B cell (primary cell): ENCODE measurements at regions of chr12 and their contacts with region 1.

Region 1: GRCh38 chr12:104286538-104287482 is 16.7 kb upstream of the EID3 start:
- DNase-seq: peak; percentile 90
- ATAC-seq: peak; percentile 83
- H3K4me3 ChIP-seq: peak overlapping the region; percentile 61 to 93 (median 82)
- H3K4me3 Mint-ChIP-seq: peak overlapping the region; percentile 100
- H3K27ac ChIP-seq: peak overlapping the region; percentile 75 to 79
- H3K27ac Mint-ChIP-seq: peak overlapping the region; percentile 99
- H3K4me1 ChIP-seq: peaks cover 25 to 29% of the 10 kb centered on the region in 2 donors
- H3K4me1 Mint-ChIP-seq: peaks cover 37% of the 10 kb centered on the region
- H3K27me3 ChIP-seq: no peaks in the 10 kb centered on the region
- H3K27me3 Mint-ChIP-seq: no peaks in the 10 kb centered on the region
- CTCF ChIP-seq: no peak

Region 2: DNA sequence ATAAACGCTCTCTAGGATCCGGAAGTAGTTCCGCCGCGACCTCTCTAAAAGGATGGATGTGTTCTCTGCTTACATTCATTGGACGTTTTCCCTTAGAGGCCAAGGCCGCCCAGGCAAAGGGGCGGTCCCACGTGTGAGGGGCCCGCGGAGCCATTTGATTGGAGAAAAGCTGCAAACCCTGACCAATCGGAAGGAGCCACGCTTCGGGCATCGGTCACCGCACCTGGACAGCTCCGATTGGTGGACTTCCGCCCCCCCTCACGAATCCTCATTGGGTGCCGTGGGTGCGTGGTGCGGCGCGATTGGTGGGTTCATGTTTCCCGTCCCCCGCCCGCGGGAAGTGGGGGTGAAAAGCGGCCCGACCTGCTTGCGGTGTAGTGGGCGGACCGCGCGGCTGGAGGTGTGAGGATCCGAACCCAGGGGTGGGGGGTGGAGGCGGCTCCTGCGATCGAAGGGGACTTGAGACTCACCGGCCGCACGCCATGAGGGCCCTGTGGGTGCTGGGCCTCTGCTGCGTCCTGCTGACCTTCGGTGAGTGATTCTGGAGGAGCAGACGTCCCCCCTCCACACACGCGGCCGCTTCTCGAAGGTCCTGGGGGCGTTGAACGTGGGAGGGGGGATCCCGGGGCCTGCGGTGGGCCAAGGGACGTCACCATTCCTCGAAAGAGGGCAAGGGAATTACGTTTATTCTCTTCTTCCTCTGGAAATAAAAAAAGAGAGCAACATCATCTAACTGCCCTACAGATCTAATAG is 356.6 kb before region 1 on chr12 and contains the start of gene HSP90B1:
- CTCF ChIA-PET with region 1: no interaction called
- POLR2A ChIA-PET with region 1: no interaction called
- intact Hi-C with region 1: loop called (anchors 2 kb)
- DNase-seq: peak; percentile 100
- ATAC-seq: peak; percentile 72
- H3K4me3 ChIP-seq: peak within 1 kb of the TSS; percentile 80 to 93 (median 85)
- H3K4me3 Mint-ChIP-seq: peak within 1 kb of the TSS; percentile 93
- H3K27ac ChIP-seq: peak within 1 kb of the TSS; percentile 97 to 100
- H3K27ac Mint-ChIP-seq: peak within 1 kb of the TSS; percentile 98
- H3K4me1 ChIP-seq: peaks cover 32 to 34% of the 10 kb centered on the region in 2 donors
- H3K4me1 Mint-ChIP-seq: peaks cover 61% of the 10 kb centered on the region
- H3K27me3 ChIP-seq: no peaks in the 10 kb centered on the region
- H3K27me3 Mint-ChIP-seq: no peaks in the 10 kb centered on the region
- CTCF ChIP-seq: no peak
- total RNA-seq, gene HSP90B1: 203 and 207 TPM in 2 replicates

Region 3: GRCh38 chr12:104121001-104121400 is 165.8 kb before region 1 on chr12:
- CTCF ChIA-PET with region 1: no interaction called
- POLR2A ChIA-PET with region 1: no interaction called
- intact Hi-C with region 1: no loop called
- DNase-seq: no peak
- ATAC-seq: no peak
- H3K4me3 ChIP-seq: no peak overlapping the region
- H3K4me3 Mint-ChIP-seq: no peak overlapping the region
- H3K27ac ChIP-seq: no peak overlapping the region
- H3K27ac Mint-ChIP-seq: no peak overlapping the region
- H3K4me1 ChIP-seq: no peaks in the 10 kb centered on the region
- H3K4me1 Mint-ChIP-seq: no peaks in the 10 kb centered on the region
- H3K27me3 ChIP-seq: no peaks in the 10 kb centered on the region
- H3K27me3 Mint-ChIP-seq: no peaks in the 10 kb centered on the region
- CTCF ChIP-seq: no peak

Region 4: DNA sequence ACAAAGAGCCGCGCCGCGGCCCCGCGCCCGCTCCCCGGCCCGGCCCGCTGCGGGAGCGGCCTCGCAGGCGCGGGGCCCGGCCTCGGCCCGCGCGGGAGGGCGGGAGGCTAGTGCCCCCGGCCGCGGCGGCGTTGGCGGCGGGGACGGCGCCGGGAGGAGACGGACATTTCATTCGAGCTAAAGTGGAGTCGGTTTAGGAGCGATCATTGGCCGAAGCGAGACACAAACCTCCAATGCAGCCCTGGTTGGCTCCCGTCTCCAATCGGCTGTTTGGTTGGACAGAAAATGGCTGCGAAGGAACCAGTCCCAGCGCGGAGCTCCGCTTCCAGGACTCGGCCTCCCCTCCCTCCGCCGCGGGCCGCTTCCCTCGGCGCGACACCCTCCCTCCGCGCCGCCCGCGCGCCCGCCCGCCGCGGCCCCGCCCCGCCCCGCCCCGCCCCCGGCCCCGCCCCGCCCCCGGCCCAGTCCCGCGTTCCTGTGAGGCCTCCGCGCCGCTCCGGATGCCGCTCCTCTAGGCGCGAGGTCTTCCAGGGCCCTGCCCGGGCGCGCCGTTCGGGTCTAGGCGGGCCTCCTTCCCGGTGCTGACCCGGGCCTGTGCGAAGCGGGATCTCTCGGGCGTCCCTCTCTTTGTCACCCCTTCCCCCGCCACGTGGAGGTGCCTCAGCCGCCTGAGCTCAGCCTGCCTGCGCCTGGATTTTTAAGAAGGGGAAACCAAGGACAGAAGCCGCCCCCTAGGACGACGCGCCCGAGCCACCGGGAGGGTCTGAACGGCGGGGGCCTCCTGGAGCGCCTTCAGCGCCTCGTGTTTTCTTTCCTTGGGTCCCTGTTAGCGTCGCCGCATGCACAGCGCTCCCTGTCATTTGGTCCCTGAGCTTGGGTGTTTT is 148.7 kb before region 1 on chr12 and contains the start of gene NFYB:
- CTCF ChIA-PET with region 1: no interaction called
- POLR2A ChIA-PET with region 1: interaction called, 4 read pairs
- intact Hi-C with region 1: loop called (anchors 5 kb)
- DNase-seq: peak; percentile 96
- ATAC-seq: peak; percentile 94
- H3K4me3 ChIP-seq: peak within 1 kb of the TSS; percentile 52 to 73 (median 67)
- H3K4me3 Mint-ChIP-seq: peak within 1 kb of the TSS; percentile 93
- H3K27ac ChIP-seq: peak within 1 kb of the TSS; percentile 43 to 70
- H3K27ac Mint-ChIP-seq: peak within 1 kb of the TSS; percentile 92
- H3K4me1 ChIP-seq: peaks cover 24 to 25% of the 10 kb centered on the region in 2 donors
- H3K4me1 Mint-ChIP-seq: peaks cover 16% of the 10 kb centered on the region
- H3K27me3 ChIP-seq: no peaks in the 10 kb centered on the region
- H3K27me3 Mint-ChIP-seq: no peaks in the 10 kb centered on the region
- CTCF ChIP-seq: no peak
- total RNA-seq, gene NFYB: 20.2 and 27.2 TPM in 2 replicates

Region 5: GRCh38 chr12:104276273-104277131 is 10.3 kb before region 1 on chr12:
- CTCF ChIA-PET with region 1: interaction called, 5 read pairs
- POLR2A ChIA-PET with region 1: interaction called, 10 read pairs
- intact Hi-C with region 1: loop called (anchors 1 kb)
- DNase-seq: peak; percentile 54
- ATAC-seq: peak; percentile 69
- H3K4me3 ChIP-seq: peak overlapping the region; percentile 19 to 64 (median 48)
- H3K4me3 Mint-ChIP-seq: peak overlapping the region; percentile 91
- H3K27ac ChIP-seq: peak overlapping the region in 1 of 2 donors; percentile 62
- H3K27ac Mint-ChIP-seq: peak overlapping the region; percentile 87
- H3K4me1 ChIP-seq: peaks cover 11 to 13% of the 10 kb centered on the region in 2 donors
- H3K4me1 Mint-ChIP-seq: peaks cover 12% of the 10 kb centered on the region
- H3K27me3 ChIP-seq: no peaks in the 10 kb centered on the region
- H3K27me3 Mint-ChIP-seq: no peaks in the 10 kb centered on the region
- CTCF ChIP-seq: no peak

Region 6: DNA sequence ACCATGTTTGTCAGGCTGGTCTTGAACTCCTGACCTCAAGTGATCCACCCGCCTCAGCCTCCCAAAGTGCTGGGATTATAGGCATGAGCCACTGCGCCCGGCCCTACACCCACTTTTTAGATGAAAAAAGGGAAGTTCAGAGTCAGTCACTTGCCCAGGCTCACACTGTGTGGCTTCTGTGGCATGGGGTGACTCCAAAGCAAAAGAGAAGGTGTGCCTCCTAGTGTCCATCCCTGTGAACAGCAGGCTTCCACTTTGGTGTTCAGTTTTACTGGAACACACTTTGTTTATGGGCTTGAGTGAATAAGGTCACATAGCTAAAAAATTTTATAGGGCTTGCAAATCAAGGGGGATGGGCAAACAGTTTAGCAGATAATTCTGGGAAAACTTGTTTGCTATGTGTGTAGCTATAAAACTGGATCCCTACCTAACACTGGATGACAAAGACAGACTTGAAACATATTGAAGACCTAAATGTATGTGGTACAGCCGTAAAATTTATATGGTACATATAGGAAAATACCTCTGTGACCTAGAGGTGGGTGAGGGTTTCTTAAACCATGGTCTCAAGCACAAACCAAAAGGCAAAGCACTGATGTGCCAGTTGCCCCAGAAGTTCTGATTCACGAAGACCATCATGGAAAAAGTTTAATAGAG is 71.7 kb after region 1 on chr12:
- CTCF ChIA-PET with region 1: no interaction called
- POLR2A ChIA-PET with region 1: no interaction called
- intact Hi-C with region 1: loop called (anchors 2 kb)
- DNase-seq: peak; percentile 82
- ATAC-seq: peak; percentile 97
- H3K4me3 ChIP-seq: no peak overlapping the region
- H3K4me3 Mint-ChIP-seq: no peak overlapping the region
- H3K27ac ChIP-seq: no peak overlapping the region
- H3K27ac Mint-ChIP-seq: no peak overlapping the region
- H3K4me1 ChIP-seq: no peaks in the 10 kb centered on the region
- H3K4me1 Mint-ChIP-seq: no peaks in the 10 kb centered on the region
- H3K27me3 ChIP-seq: no peaks in the 10 kb centered on the region
- H3K27me3 Mint-ChIP-seq: no peaks in the 10 kb centered on the region
- CTCF ChIP-seq: peak; percentile 76

Region 7: DNA sequence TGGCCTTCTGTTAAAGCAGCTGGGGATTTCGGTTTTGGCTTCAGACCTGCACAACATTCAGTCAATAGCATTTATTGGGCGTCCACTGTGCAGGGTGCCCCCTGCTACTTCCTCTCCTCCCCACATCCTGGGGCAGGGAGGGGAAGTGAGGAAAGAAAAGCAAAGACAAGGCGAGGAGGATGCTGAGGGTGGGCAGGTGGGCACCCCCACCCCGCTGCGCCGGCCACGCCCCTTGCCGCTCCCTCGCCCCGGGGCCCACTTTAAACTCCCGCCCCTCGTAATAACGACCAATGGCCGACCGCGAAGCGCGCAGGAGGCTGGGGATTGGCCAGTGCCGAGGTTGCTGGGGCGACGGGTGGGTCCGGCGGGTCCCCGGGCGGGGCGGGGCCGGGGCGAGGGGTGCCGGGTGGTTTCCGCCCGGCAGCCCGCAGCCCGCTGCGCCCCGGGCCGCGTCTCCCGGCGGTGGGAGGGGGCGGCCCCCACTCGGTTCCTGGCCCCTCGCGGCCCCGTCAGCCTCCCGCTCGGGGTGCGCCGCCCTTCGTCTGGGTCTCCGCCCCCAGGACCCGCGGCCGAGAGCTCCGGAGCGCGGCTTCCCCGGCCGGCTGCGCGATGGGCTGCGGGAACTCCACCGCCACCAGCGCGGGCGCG is 1043.6 kb after region 1 on chr12 and contains the start of gene C12orf75:
- CTCF ChIA-PET with region 1: no interaction called
- POLR2A ChIA-PET with region 1: no interaction called
- intact Hi-C with region 1: loop called (anchors 2 kb)
- DNase-seq: peak; percentile 89
- ATAC-seq: peak; percentile 93
- H3K4me3 ChIP-seq: peak within 1 kb of the TSS; percentile 25 to 78 (median 69)
- H3K4me3 Mint-ChIP-seq: peak within 1 kb of the TSS; percentile 92
- H3K27ac ChIP-seq: peak within 1 kb of the TSS; percentile 52 to 69
- H3K27ac Mint-ChIP-seq: peak within 1 kb of the TSS; percentile 86
- H3K4me1 ChIP-seq: peaks cover 27 to 38% of the 10 kb centered on the region in 2 donors
- H3K4me1 Mint-ChIP-seq: peaks cover 44% of the 10 kb centered on the region
- H3K27me3 ChIP-seq: no peaks in the 10 kb centered on the region
- H3K27me3 Mint-ChIP-seq: no peaks in the 10 kb centered on the region
- CTCF ChIP-seq: no peak
- total RNA-seq, gene C12orf75: 7.9 and 12.9 TPM in 2 replicates